H1 (cell line): ENCODE measurements at regions of chr5 and their contacts with region 1.

Region 1: GRCh38 chr5:16806711-16807546 is 129.2 kb downstream of the MYO10 start:
- DNase-seq: no peak
- H3K4me3 ChIP-seq: no peak overlapping the region
- H3K27ac ChIP-seq: no peak overlapping the region
- H3K4me1 ChIP-seq: no peaks in the 10 kb centered on the region
- H3K27me3 ChIP-seq: no peaks in the 10 kb centered on the region
- CTCF ChIP-seq: no peak
- EP300 ChIP-seq: no peak
- POLR2A ChIP-seq: no peak
- RAD21 ChIP-seq: no peak

Region 2: DNA sequence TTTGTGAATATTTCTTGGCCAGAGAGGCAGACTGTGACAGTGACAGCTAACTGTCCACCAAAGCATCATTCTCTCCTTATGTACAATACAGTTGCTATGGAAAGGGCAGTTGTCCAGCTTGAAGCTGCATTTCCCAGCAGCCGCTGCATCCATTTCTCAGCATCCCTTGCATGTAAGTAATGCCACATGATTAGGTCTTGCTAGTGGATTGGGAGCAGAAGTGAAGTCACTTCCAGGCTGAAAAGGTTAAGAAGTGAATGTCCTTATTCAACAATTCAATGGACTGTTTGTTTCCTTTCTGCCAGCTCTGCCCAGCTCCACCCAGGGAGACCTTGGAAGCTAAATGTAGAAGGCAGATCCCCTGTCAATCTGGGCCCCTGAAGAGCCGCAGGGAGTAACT is 164.1 kb before region 1 on chr5:
- CTCF ChIA-PET with region 1: no interaction called
- POLR2A ChIA-PET with region 1: no interaction called
- DNase-seq: no peak
- H3K4me3 ChIP-seq: no peak overlapping the region
- H3K27ac ChIP-seq: no peak overlapping the region
- H3K4me1 ChIP-seq: 0 out of 7 replicates have a peak, but pooled peaks cover 0 to 3% (median 0%) of the 10 kb centered on the region in 4 experiments
- H3K27me3 ChIP-seq: no peaks in the 10 kb centered on the region
- CTCF ChIP-seq: no peak
- EP300 ChIP-seq: no peak
- POLR2A ChIP-seq: no peak
- RAD21 ChIP-seq: no peak

Region 3: DNA sequence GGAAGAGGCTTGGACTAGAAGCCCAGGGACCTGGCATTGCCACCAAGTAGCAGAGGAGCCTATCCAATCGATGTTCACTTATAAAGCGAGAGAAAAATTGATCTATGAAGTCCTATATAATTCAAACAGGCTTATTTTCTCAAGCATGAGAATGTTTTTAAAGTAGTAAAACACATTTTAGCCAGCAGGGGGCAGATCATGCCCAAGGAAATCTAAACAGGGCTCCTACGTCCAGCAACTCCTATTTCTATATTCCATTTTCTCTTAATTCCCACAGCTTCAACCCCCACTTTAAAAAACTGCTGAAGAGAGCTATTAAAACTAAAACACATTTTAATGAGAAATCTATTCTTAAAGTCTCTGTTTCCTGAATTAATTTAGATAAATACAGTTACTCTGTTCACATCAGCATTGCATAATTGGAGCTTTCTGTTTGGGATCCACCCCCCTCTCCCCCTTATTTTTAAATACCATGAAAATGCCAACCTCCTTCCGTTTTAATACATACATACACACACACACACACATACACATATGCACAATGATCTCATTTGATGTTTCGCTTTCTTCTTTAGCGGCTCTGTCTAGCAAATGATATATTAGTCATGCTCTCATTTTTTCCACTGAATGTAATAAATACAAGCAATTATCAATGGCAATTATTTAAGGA is 15.8 kb before region 1 on chr5:
- CTCF ChIA-PET with region 1: interaction called, 11 read pairs
- POLR2A ChIA-PET with region 1: no interaction called
- DNase-seq: no peak
- H3K4me3 ChIP-seq: no peak overlapping the region
- H3K27ac ChIP-seq: no peak overlapping the region
- H3K4me1 ChIP-seq: peaks cover 0 to 2% (median 0%) of the 10 kb centered on the region in 4 experiments; a peak in 2 of 7 replicates
- H3K27me3 ChIP-seq: no peaks in the 10 kb centered on the region
- CTCF ChIP-seq: peak in 2 of 3 experiments; percentile 55 to 56; a peak in 3 of 4 replicates
- EP300 ChIP-seq: no peak
- POLR2A ChIP-seq: no peak
- RAD21 ChIP-seq: peak; percentile 80 to 81